Posterior vena cava (tissue), 2 donors: ENCODE measurements at regions of chr17 and their contacts with region 1.

Region 1: DNA sequence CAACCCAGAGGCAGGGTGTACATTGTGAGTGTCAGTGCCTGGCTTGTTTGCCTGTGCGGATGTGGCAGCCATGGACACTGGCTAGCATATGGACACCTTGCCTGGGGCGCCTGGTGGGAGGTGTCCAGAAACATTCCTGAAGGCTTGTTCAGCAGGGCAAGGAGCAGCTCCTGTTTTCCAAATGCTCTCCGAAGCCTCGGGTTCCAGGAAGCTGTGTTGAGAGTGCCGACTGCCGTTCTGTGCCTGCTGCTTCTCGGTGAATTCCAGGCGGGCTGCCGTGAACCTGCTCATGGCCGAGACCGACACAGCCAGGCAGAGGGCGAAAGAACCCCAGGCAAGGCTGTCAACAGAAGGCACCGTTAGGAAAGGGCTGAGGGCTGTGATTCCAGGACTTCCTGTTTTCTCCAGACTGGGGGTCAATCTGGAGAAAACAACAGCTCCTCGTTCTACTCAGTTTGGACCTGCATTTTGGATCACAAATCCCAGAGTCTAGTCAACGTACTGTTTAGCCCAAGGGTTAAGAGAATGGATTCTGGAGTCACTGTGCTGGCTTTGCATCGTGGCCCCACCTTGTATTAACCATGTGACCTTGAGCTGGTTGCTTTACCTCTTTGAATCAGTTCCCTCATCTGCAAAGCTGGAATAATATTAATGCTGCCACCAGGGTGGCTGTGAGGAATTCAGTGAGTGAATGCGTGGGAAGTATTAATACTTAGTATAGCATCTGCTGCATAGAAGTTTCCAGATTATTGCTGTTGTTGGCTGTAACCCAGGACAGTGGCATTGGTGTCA is 11.1 kb upstream of the DHRS7C start:
- DNase-seq: no peak

Region 2: GRCh38 chr17:9726291-9726690 is 76.2 kb before region 1 on chr17:
- intact Hi-C with region 1: loop called in 1 of 2 experiments (anchors 2 kb)
- DNase-seq: no peak